Mammary epithelial cell (primary cell): ENCODE measurements at regions of chr6 and their contacts with region 1.

Region 1: GRCh38 chr6:110873981-110874879 is at the start of gene AMD1:
- DNase-seq: peak; percentile 94
- H3K4me3 ChIP-seq: peak within 1 kb of the TSS; percentile 73 to 99 (median 85)
- H3K27ac ChIP-seq: peak within 1 kb of the TSS; percentile 91
- H3K4me1 ChIP-seq: peaks cover 18% of the 10 kb centered on the region
- H3K27me3 ChIP-seq: no peaks in the 10 kb centered on the region
- CTCF ChIP-seq: peak in 1 of 2 donors; percentile 1
- total RNA-seq, gene AMD1: 69.7 to 97.5 TPM

Region 2: DNA sequence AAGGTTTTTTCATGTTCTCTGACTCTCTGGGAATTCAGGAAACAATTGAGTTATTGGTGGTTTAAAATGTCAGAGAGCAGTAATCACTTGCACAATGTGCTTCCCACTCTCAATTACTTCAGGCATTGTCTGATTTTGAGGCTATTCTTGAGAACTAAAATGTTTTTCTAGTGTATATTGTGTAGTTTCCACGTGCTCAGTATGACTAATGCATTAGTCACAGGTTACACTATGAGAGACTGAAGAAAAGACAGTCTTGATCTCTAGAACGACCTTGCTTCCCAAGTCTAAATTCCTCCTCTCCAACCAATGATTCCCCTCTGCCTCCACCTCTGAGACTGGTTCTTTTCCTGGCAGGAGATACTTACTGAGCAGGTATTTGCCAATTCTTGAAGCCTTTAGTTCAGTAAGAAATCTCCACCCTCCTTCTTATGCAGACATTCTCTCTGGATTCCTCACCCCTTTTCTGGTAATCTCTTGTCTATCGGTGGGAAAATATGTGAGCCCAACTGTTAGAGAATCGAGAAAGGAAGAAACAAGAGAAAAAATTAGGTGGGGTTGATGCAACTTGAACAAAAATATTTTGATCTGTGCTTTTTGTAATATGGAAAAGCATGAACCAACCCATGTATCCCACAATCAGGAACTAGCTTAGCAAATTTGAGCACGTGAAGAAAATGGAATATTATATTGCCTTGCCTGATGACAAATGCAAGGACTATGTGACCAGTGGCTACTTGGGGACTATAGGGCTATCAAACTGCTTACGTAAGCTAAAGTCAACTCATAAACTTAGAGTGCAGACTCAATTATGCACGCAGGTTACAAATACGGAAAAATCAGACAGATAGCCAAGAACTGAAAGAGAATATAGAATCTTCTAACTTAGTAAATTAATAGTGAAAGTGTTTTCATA is 336.8 kb before region 1 on chr6:
- CTCF ChIA-PET with region 1: no interaction called
- dilution Hi-C with region 1: loop called (anchors 5 kb)
- in situ Hi-C with region 1: loop called in 1 of 2 experiments (anchors 10 kb)
- intact Hi-C with region 1: no loop called
- DNase-seq: peak; percentile 99
- H3K4me3 ChIP-seq: no peak overlapping the region
- H3K27ac ChIP-seq: peak overlapping the region; percentile 87
- H3K4me1 ChIP-seq: peaks cover 23% of the 10 kb centered on the region
- H3K27me3 ChIP-seq: no peaks in the 10 kb centered on the region
- CTCF ChIP-seq: no peak

Region 3: GRCh38 chr6:110682460-110682853 is 191.8 kb before region 1 on chr6:
- CTCF ChIA-PET with region 1: no interaction called
- dilution Hi-C with region 1: no loop called
- in situ Hi-C with region 1: loop called in 1 of 2 experiments (anchors 25 kb)
- intact Hi-C with region 1: loop called (anchors 1 kb)
- DNase-seq: peak; percentile 68
- H3K4me3 ChIP-seq: no peak overlapping the region
- H3K27ac ChIP-seq: no peak overlapping the region
- H3K4me1 ChIP-seq: peaks cover 3% of the 10 kb centered on the region
- H3K27me3 ChIP-seq: no peaks in the 10 kb centered on the region
- CTCF ChIP-seq: peak; percentile 50 to 75

Region 4: DNA sequence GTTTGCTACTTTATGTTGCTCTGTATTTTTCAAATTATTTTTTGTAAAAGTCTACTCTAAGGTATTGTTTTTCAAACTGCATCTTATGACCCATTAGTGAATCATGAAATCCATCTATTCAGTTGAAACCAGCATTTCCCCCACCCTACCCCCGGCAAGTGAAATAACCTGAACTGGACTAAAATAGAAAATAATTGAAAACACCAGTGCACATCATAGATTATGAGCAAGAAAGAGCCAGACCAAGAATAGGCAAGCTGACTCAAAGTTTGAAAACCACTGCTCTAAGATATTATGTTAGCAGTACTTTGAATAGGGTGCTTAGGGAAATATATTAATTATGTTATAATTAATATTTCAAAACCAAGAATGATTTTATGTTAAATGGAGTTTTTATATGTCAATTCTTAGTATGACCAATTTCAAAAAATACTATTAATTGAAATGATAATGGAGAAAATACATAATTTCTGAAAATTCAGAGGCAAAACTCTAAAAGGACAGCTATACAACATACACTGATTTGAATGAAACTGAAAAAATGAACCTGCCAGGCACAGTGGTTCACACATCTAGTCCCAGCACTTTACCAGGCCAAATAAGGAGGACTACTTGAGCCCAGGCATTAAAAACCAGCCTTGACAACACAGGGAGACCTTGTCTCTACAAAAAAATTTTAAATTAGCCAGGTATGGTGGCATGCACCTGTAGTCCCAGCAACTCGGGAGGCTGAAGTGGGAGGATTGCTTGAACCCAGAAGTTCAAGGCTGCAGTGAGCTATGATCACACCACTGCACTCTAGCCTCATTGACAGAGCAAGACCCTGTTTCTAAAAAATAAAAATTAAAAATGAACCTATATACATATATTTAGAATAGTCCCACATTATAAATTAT is 171.0 kb before region 1 on chr6:
- CTCF ChIA-PET with region 1: no interaction called
- dilution Hi-C with region 1: no loop called
- in situ Hi-C with region 1: loop called in 1 of 2 experiments (anchors 25 kb)
- intact Hi-C with region 1: loop called (anchors 1 kb)
- DNase-seq: no peak
- H3K4me3 ChIP-seq: no peak overlapping the region
- H3K27ac ChIP-seq: no peak overlapping the region
- H3K4me1 ChIP-seq: peaks cover 13% of the 10 kb centered on the region
- H3K27me3 ChIP-seq: no peaks in the 10 kb centered on the region
- CTCF ChIP-seq: no peak

Region 5: DNA sequence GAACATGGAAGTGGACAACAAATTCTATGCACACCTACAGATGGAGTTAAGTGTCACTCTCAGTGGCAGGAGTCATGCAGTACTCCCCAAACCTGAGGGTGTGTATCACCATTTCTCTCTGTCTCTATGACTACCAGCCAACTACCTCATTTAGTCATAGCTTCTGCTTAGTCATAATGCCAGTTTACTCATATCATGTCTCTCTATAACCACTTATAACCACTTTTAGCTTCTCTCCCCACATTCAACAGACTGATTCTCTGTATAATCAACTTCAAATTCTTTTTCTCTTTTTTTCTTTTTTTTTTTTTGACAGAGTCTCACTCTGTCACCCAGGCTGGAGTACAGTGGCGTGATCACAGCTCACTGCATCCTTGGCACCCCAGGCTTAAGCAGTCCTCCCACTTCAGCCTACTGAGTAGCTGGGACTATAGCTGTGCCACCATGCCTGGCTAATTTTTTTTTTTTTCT is 70.5 kb after region 1 on chr6:
- CTCF ChIA-PET with region 1: interaction called, 10 read pairs
- dilution Hi-C with region 1: no loop called
- in situ Hi-C with region 1: no loop called
- intact Hi-C with region 1: loop called (anchors 1 kb)
- DNase-seq: peak; percentile 96
- H3K4me3 ChIP-seq: no peak overlapping the region
- H3K27ac ChIP-seq: peak overlapping the region; percentile 92
- H3K4me1 ChIP-seq: peaks cover 19% of the 10 kb centered on the region
- H3K27me3 ChIP-seq: no peaks in the 10 kb centered on the region
- CTCF ChIP-seq: no peak

Region 6: GRCh38 chr6:110981202-110981600 is 107.0 kb after region 1 on chr6:
- CTCF ChIA-PET with region 1: no interaction called
- dilution Hi-C with region 1: loop called (anchors 5 kb)
- in situ Hi-C with region 1: no loop called
- intact Hi-C with region 1: loop called (anchors 1 kb)
- DNase-seq: no peak
- H3K4me3 ChIP-seq: peak overlapping the region; percentile 55 to 81 (median 79)
- H3K27ac ChIP-seq: peak overlapping the region; percentile 83
- H3K4me1 ChIP-seq: peaks cover 9% of the 10 kb centered on the region
- H3K27me3 ChIP-seq: no peaks in the 10 kb centered on the region
- CTCF ChIP-seq: no peak